H1 (cell line): ENCODE measurements at regions of chr15 and their contacts with region 1.

Region 1: GRCh38 chr15:74964794-74965193 is 8.2 kb upstream of the RPP25 start:
- DNase-seq: no peak
- H3K4me3 ChIP-seq: no peak overlapping the region
- H3K27ac ChIP-seq: no peak overlapping the region
- H3K4me1 ChIP-seq: peaks cover 0 to 2% (median 0%) of the 10 kb centered on the region in 4 experiments; a peak in 3 of 7 replicates
- H3K27me3 ChIP-seq: peaks cover 0 to 6% (median 0%) of the 10 kb centered on the region in 4 experiments; a peak in 3 of 7 replicates
- CTCF ChIP-seq: no peak
- EP300 ChIP-seq: no peak
- POLR2A ChIP-seq: no peak
- RAD21 ChIP-seq: no peak

Region 2: DNA sequence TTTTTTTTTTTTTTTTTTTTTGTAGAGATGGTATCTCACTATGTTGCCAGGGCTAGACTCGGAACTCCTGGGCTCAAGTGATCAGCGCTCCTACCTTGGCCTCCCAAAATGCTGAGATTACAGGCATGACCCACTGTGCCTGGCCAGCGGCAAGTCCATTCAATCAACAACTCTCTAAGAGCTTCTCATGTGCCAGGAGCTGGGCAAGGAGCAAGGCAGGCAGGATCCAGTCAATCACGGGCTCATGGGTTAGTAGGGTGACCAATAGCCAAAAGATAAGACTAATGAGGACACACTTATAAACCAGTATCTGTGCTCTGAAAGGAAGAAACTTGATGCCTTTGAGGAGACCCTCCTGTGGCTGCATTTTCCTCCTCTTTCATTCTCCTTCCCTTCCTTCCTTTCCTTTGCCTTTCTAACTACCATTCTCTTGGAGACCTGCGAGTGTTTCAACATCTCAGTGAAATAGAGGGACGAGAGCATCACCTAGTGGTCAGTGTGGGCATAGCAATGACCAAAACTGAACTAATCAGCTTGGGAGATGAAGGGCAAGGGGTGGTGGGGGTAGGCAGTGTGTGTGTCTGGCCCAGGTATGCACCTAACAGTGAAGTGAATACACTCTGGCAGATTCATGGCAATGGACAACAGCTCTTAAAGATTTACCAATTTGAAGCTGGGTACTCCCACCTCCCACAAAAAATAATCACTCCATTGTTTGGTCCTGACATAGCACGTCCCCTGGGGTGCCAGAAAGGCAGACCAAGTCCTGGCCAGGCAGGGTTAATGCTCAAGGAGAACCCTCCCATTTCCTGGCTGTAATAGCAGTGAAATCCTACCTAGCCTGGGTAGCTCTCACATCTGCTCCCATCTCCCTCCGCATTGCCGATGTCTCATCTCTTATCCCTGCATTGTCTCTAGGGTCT is 14.5 kb before region 1 on chr15:
- CTCF ChIA-PET with region 1: interaction called, 19 read pairs
- POLR2A ChIA-PET with region 1: interaction called, 7 read pairs
- DNase-seq: peak in 1 of 2 experiments; percentile 97
- H3K4me3 ChIP-seq: no peak overlapping the region
- H3K27ac ChIP-seq: no peak overlapping the region
- H3K4me1 ChIP-seq: peaks cover 3 to 19% (median 9%) of the 10 kb centered on the region in 4 experiments
- H3K27me3 ChIP-seq: peaks cover 0 to 6% (median 4%) of the 10 kb centered on the region in 4 experiments; a peak in 5 of 7 replicates
- CTCF ChIP-seq: peak; percentile 77 to 100 (median 90)
- EP300 ChIP-seq: no peak
- POLR2A ChIP-seq: no peak
- RAD21 ChIP-seq: peak; percentile 93

Region 3: GRCh38 chr15:74978503-74978902 is 13.7 kb after region 1 on chr15:
- CTCF ChIA-PET with region 1: interaction called, 20 read pairs
- POLR2A ChIA-PET with region 1: interaction called, 4 read pairs
- DNase-seq: no peak
- H3K4me3 ChIP-seq: no peak overlapping the region
- H3K27ac ChIP-seq: no peak overlapping the region
- H3K4me1 ChIP-seq: peaks cover 0 to 4% (median 1%) of the 10 kb centered on the region in 4 experiments; a peak in 3 of 7 replicates
- H3K27me3 ChIP-seq: no peaks in the 10 kb centered on the region
- CTCF ChIP-seq: no peak
- EP300 ChIP-seq: no peak
- POLR2A ChIP-seq: no peak
- RAD21 ChIP-seq: no peak